ENCODE measurements at regions of chrX and their contacts with region 1.

Region 1: GRCh38 chrX:34559325-34559724 is 97.8 kb downstream of the TMEM47 start:
- DNase-seq: no peak
- H3K4me3 ChIP-seq: no peak overlapping the region
- H3K27me3 ChIP-seq: no peaks in the 10 kb centered on the region
- CTCF ChIP-seq: no peak

Region 2: GRCh38 chrX:34810364-34810763 is 251.0 kb after region 1 on chrX:
- CTCF ChIA-PET with region 1: no interaction called
- POLR2A ChIA-PET with region 1: no interaction called
- DNase-seq: no peak
- H3K4me3 ChIP-seq: no peak overlapping the region
- H3K27me3 ChIP-seq: no peaks in the 10 kb centered on the region
- CTCF ChIP-seq: no peak

Region 3: DNA sequence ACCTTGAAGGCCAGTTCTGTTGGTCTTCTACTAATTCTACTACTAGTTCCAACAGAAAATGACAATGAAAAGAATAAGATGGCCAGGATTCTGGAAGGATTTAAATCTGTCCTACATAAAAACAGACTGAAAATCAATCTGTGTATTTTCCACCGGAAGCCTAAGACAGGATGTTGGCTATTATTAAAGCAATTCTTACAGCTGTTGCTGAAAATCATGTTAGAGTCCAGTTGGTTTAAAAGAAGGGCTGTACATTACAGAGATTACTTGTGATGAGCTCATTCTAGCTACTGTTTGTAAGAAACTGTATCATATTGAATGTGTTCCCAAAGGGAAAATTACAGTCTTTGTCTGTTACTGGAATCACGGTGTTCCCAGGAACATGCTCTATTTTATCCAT is 1184.0 kb after region 1 on chrX:
- CTCF ChIA-PET with region 1: no interaction called
- POLR2A ChIA-PET with region 1: interaction called, 12 read pairs
- DNase-seq: no peak
- H3K4me3 ChIP-seq: no peak overlapping the region
- H3K27me3 ChIP-seq: no peaks in the 10 kb centered on the region
- CTCF ChIP-seq: no peak